ENCODE measurements at regions of chr3 and their contacts with region 1.

Region 1: DNA sequence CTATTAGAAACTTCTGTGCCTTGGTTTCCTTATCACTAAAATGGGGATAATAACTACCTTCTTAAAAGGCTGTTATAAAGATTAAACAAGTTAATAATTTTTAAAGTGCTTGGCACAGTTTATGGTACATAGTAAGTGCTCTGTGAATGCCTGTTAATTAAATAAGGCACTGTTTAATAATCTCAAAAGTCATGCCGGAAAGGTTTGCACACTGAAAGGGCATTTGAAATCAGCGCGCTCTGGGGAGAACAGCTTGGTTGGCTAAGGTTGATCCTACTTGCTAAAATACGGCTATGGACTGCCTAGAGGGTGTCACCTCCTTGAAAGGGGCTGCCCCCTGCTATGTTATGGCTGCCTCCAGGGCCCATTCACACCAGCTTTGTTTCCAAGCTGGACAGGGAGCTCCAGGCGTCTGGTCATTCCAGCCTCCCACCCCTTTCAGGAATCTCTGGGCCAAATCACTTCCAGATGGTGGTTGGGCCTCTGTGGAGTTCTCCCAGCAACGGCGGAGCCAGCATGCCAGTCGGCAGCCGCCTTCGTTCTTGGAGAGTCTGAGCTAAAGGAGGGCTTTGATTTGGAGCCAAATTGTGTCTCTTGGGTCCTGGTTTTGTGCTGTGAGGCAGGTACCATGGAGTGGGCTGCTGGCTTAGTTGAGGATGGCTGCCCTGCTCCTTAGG is 5.9 kb downstream of the FLNB start:
- DNase-seq: peak; percentile 38
- H3K4me3 ChIP-seq: no peak overlapping the region
- H3K27ac ChIP-seq: peak overlapping the region; percentile 40
- H3K4me1 ChIP-seq: peaks cover 76% of the 10 kb centered on the region
- H3K27me3 ChIP-seq: no peaks in the 10 kb centered on the region
- CTCF ChIP-seq: no peak

Region 2: GRCh38 chr3:57841818-57842217 is 172.3 kb before region 1 on chr3:
- intact Hi-C with region 1: no loop called
- DNase-seq: no peak
- H3K4me3 ChIP-seq: no peak overlapping the region
- H3K27ac ChIP-seq: no peak overlapping the region
- H3K4me1 ChIP-seq: no peaks in the 10 kb centered on the region
- H3K27me3 ChIP-seq: no peaks in the 10 kb centered on the region
- CTCF ChIP-seq: no peak

Region 3: DNA sequence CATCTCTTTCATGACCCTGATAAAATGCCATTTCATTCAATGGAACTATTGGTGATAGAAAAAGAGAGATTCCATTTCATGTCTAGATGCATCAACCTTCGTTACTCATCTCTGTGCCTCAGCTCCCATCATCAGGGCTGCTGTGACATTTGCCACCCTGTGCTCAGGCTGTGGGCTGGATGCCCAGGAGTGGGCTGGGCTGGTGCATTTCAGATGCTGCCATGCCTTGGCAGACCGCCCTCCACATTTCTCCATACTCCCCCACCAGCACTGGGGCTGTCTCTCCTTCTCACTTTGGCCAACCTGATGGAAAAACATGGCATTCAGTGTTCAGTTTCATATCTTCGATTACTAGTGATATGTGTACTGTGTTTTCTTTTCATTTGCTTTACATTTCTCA is 137.5 kb after region 1 on chr3:
- intact Hi-C with region 1: loop called (anchors 10 kb)
- DNase-seq: peak; percentile 80
- H3K4me3 ChIP-seq: no peak overlapping the region
- H3K27ac ChIP-seq: peak overlapping the region; percentile 11
- H3K4me1 ChIP-seq: peaks cover 21% of the 10 kb centered on the region
- H3K27me3 ChIP-seq: no peaks in the 10 kb centered on the region
- CTCF ChIP-seq: no peak

Region 4: DNA sequence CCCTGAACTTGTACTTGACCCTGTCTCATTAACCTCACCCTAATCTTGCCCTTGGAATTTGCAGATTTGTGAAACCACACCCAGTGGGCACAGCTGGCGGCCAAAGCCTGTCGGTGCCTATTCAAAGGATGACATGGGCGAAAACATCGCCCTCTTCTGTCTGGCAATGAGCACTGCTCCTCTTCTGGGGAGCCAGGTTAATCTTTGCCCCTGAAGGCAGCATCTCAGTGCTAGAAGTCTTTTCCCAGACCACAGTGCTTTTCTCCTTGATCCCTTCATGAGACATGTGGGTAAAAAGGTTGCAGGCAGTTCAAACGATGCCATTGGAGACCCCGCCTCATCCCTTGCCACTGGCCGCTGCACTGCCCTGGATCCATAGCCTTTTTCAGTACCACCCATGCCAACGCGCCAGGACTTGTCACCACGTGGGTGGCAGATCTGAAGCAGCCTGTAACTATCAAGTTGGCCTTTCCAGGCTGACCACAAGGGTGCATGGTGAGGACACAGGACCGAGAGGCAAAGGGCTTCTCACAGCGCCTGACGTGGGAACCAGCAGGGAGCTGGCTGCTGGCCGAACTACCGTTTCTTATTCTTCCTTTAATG is 203.2 kb after region 1 on chr3:
- intact Hi-C with region 1: no loop called
- DNase-seq: peak; percentile 66
- H3K4me3 ChIP-seq: peak overlapping the region; percentile 17
- H3K27ac ChIP-seq: peak overlapping the region; percentile 71
- H3K4me1 ChIP-seq: peaks cover 26% of the 10 kb centered on the region
- H3K27me3 ChIP-seq: no peaks in the 10 kb centered on the region
- CTCF ChIP-seq: peak; percentile 76

Measured in left ventricle myocardium inferior (tissue), 1 donor.